HEK293T (cell line): ENCODE measurements at regions of chr1 and their contacts with region 1.

Region 1: DNA sequence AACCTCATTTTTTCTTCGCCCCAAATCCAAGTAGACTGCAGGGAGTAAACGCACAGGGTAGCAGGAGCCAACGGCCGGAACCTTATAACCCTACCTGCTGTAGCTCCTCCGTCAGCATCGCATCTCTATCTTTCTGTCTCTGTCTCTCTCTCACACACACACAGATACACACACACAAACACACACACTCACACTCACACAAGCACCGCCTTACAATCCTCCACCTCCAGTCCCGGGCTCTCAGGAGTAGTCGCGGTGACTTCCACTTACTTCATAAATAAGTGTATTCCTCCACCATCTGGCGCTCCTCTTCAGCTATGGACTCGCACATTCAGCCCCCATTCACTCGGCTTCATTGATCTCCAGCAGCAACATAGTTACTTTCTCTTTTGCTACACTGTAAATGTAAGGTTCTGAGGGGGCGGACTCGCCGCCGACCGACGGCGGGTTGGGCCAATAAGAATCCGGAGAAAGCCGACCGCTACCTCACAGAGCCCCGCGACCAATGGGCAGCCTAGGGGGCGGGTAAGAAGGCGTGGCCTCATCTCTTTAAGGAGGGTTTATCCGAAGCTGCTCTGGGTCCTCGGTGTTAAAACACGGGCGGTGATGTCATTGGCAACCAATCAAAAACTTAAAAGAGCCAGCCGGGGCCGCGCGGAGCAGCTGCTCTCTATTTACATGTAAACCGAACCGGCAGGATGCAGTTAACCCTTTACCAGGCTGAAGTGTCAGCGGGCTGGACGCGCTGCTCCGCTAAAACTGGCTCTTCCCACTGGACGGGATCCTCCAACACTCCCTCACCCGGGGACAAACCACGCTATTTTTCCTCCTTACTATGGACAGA is at the start of gene DUSP10:
- DNase-seq: peak; percentile 97

Region 2: DNA sequence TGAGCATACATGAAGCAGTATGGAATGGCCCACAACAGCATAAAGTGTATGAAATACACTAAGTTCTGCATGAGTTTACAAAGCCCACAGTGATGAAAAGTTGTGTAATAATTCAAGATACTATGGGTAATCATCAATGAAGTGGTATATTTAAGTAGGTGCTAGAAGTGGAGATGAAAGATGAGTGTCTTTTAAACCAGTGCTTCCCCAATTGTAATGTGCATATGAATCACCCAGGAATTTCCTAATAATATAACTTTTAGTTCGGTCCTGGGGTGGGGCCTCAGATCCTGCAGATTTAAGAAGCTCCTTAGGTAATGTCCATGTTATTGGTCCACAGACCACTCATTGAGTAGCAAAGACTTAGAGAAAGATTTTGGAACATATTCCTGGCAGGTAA is 184.9 kb before region 1 on chr1:
- CTCF ChIA-PET with region 1: no interaction called
- POLR2A ChIA-PET with region 1: no interaction called
- DNase-seq: no peak

Region 3: GRCh38 chr1:221718381-221719277 is 23.3 kb before region 1 on chr1:
- CTCF ChIA-PET with region 1: interaction called, 3 read pairs
- POLR2A ChIA-PET with region 1: interaction called, 25 read pairs
- DNase-seq: peak; percentile 14

Region 4: DNA sequence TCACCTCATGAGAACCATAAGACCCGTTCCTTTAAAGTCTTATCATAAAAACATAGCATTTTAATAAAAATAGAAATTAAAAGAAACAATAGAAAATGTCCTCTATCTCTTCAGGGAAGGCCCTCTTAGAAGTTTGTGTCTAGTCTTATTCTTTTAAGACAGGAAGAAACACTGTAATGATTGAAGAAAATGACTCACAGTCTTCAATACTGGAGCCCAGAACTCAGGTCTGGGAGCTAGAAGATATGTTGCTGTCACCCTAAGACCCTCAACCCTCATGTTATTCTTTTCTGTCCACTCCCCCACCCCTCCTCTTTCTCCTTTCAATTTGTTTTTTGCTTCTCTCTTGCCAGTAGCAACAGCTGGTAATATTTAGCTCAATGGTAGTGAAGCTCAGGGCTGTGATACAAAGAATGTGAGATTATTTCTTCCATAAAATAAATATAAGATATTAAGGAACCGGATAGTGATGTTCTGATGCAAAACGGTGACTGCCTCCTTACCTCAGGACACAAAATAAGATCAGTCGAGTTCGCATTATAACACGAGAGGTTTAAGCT is 12.1 kb before region 1 on chr1:
- CTCF ChIA-PET with region 1: interaction called, 4 read pairs
- POLR2A ChIA-PET with region 1: interaction called, 10 read pairs
- DNase-seq: no peak

Region 5: GRCh38 chr1:222691016-222691415 is 949.1 kb after region 1 on chr1:
- CTCF ChIA-PET with region 1: no interaction called
- POLR2A ChIA-PET with region 1: no interaction called
- DNase-seq: no peak